ENCODE measurements at regions of chr3 and their contacts with region 1.

Region 1: DNA sequence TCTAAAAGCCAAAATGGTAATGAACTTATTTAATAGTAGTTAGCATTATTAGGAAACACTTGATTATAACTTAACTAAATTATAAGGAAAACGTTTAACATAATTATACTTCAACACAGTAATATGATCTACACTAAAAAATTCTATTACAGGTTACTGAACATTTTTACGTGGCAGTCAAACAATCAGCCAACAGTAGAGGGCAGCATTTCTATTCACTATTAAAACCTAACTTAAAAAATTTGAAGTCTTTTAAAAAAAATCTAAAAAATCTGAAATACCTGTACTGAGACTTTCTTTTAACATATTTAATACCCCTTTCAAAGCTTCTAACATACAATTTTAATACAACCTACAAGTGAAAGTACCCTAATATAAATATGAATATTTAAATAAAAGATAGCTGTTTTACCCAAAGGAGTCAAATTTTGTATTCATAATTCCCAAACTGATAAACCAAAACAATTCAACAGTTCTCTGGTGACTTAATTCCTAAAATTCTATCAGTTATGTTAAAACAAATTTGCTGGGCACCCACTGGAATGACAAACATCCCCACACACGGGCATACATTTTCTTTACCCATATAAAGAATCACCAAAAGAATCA is 41.5 kb downstream of the DLG1 start:
- DNase-seq: no peak

Region 2: GRCh38 chr3:197103766-197104165 is 153.2 kb before region 1 on chr3:
- intact Hi-C with region 1: loop called in 1 of 2 experiments (anchors 10 kb)
- DNase-seq: no peak

Region 3: GRCh38 chr3:197511130-197511529 is 254.2 kb after region 1 on chr3:
- intact Hi-C with region 1: loop called in 1 of 2 experiments (anchors 5 kb)
- DNase-seq: no peak